ENCODE measurements at regions of chr2 and their contacts with region 1.

Region 1: GRCh38 chr2:177783835-177784744 is 288.5 kb downstream of the PDE11A start:
- DNase-seq: no peak
- H3K4me3 ChIP-seq: peak overlapping the region; percentile 3 to 40; a peak in 2 of 4 replicates
- H3K27ac ChIP-seq: peak overlapping the region; percentile 42 to 58; a peak in 3 of 4 replicates
- H3K4me1 ChIP-seq: no peaks in the 10 kb centered on the region; a peak in 2 of 4 replicates
- H3K27me3 ChIP-seq: no peaks in the 10 kb centered on the region
- CTCF ChIP-seq: no peak
- EP300 ChIP-seq: no peak
- RAD21 ChIP-seq: no peak

Region 2: GRCh38 chr2:177799531-177799930 is 15.4 kb after region 1 on chr2:
- CTCF ChIA-PET with region 1: interaction called, 10 read pairs
- POLR2A ChIA-PET with region 1: no interaction called
- DNase-seq: peak; percentile 38
- H3K4me3 ChIP-seq: no peak overlapping the region
- H3K27ac ChIP-seq: no peak overlapping the region
- H3K4me1 ChIP-seq: peaks cover 0 to 3% of the 10 kb centered on the region in 2 experiments; a peak in 2 of 4 replicates
- H3K27me3 ChIP-seq: no peaks in the 10 kb centered on the region
- CTCF ChIP-seq: peak; percentile 66
- EP300 ChIP-seq: no peak
- RAD21 ChIP-seq: peak; percentile 61